ENCODE measurements at regions of chr2 and their contacts with region 1.

Region 1: DNA sequence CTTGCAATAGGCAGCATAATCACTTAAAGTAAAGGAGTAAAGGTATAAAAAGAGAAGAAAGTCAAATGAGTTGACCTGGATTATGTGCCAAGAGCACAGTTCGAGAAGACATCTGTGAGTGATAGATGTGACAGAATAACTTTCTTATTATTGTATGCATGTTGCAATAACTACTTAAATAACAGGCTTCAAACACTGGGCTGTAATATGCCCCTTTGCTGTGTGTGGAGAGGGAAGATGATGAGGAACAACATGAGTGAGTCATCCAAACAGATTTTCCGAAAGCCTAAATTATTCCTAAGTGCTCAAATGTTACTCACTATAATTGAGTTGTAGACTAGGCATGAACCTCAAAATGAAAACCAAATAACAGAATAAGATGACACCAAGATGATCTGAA is 328.1 kb downstream of the EXOC6B start:
- DNase-seq: no peak
- H3K4me3 ChIP-seq: no peak overlapping the region
- H3K27ac ChIP-seq: no peak overlapping the region
- H3K4me1 ChIP-seq: no peaks in the 10 kb centered on the region
- H3K27me3 ChIP-seq: no peaks in the 10 kb centered on the region
- CTCF ChIP-seq: no peak

Region 2: DNA sequence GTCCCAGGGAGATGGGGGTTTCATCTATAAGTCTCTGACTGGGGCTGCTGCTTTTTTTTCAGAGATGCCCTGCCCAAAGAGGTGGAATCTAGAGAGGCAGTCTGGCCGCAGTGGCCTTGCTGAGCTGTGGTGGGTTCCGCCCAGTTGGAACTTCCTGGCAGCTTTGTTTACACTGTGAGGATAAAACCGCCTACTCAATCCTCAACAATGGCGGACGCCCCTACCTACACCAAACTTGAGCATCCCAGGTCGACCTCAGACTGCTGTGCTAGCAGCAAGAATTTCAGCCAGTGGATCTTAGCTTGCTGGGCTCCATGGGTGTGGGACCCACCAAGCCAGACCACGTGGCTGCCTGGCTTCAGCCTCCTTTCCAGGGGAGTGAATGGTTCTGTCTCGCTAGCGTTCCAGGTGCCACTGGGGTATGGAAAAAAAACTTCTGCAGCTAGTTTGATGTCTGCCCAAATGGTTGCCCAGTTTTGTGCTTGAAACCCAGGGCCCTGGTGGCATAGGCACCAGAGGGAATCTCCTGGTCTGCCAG is 197.5 kb before region 1 on chr2:
- CTCF ChIA-PET with region 1: interaction called, 11 read pairs
- dilution Hi-C with region 1: no loop called
- in situ Hi-C with region 1: no loop called
- intact Hi-C with region 1: no loop called
- DNase-seq: no peak
- H3K4me3 ChIP-seq: no peak overlapping the region
- H3K27ac ChIP-seq: no peak overlapping the region
- H3K4me1 ChIP-seq: no peaks in the 10 kb centered on the region
- H3K27me3 ChIP-seq: no peaks in the 10 kb centered on the region
- CTCF ChIP-seq: no peak

Measured in mammary epithelial cell (primary cell).